ENCODE measurements at regions of chr1 and their contacts with region 1.

Region 1: GRCh38 chr1:236534151-236534651 is 10.4 kb downstream of the LGALS8 start:
- DNase-seq: peak; percentile 24
- H3K4me3 Mint-ChIP-seq: peak overlapping the region; percentile 22
- H3K27ac Mint-ChIP-seq: peak overlapping the region; percentile 90
- H3K4me1 Mint-ChIP-seq: peaks cover 40% of the 10 kb centered on the region
- H3K27me3 Mint-ChIP-seq: no peaks in the 10 kb centered on the region

Region 2: GRCh38 chr1:236523701-236524141 is 10.5 kb before region 1 on chr1 and contains the start of gene LGALS8:
- intact Hi-C with region 1: loop called (anchors 1 kb)
- DNase-seq: peak; percentile 78
- H3K4me3 Mint-ChIP-seq: peak within 1 kb of the TSS; percentile 99
- H3K27ac Mint-ChIP-seq: peak within 1 kb of the TSS; percentile 100
- H3K4me1 Mint-ChIP-seq: peaks cover 36% of the 10 kb centered on the region
- H3K27me3 Mint-ChIP-seq: no peaks in the 10 kb centered on the region
- total RNA-seq, gene LGALS8: 56.6 and 66.2 TPM in 2 replicates

Measured in activated T-helper 1 cell treated with anti-CD3 and anti-CD28 coated beads, Interleukin-12 subunit alpha, Interleukin-12 subunit beta, Interleukin-2, Interleukin-4 antibody, amounts not matched to agents 30 ng/mL and 10 ng/mL and 1 ng/mL, durations not matched to agents 14 hours and 24 hours and 36 hours (primary cell).